Heart left ventricle (tissue), 16 donors: ENCODE measurements at regions of chr17 and their contacts with region 1.

Region 1: GRCh38 chr17:49707608-49708514 is at the start of gene SLC35B1:
- DNase-seq: peak; percentile 99 to 100 (median 99)
- ATAC-seq: peak; percentile 99 to 100 (median 100)
- H3K4me3 ChIP-seq: peak within 1 kb of the TSS; percentile 72 to 100 (median 90)
- H3K27ac ChIP-seq: peak within 1 kb of the TSS; percentile 88 to 99 (median 95)
- H3K4me1 ChIP-seq: peaks cover 0 to 30% (median 19%) of the 10 kb centered on the region in 12 donors
- H3K27me3 ChIP-seq: no peaks in the 10 kb centered on the region
- CTCF ChIP-seq: peak; percentile 50 to 91 (median 72)
- POLR2A ChIP-seq: peak in 1 of 2 donors; percentile 70
- total RNA-seq, gene SLC35B1: 61.0 to 93.4 (median 66.2) TPM

Region 2: GRCh38 chr17:49434821-49435670 is 272.8 kb before region 1 on chr17:
- intact Hi-C with region 1: loop called in 1 of 10 experiments (anchors 10 kb)
- DNase-seq: peak in 1 of 5 donors; percentile 19
- ATAC-seq: peak; percentile 53 to 76 (median 66)
- H3K4me3 ChIP-seq: no peak overlapping the region
- H3K27ac ChIP-seq: no peak overlapping the region
- H3K4me1 ChIP-seq: no peaks in the 10 kb centered on the region
- H3K27me3 ChIP-seq: peaks cover 2 to 30% (median 19%) of the 10 kb centered on the region in 9 donors
- CTCF ChIP-seq: peak; percentile 53 to 80 (median 73)
- POLR2A ChIP-seq: no peak

Region 3: DNA sequence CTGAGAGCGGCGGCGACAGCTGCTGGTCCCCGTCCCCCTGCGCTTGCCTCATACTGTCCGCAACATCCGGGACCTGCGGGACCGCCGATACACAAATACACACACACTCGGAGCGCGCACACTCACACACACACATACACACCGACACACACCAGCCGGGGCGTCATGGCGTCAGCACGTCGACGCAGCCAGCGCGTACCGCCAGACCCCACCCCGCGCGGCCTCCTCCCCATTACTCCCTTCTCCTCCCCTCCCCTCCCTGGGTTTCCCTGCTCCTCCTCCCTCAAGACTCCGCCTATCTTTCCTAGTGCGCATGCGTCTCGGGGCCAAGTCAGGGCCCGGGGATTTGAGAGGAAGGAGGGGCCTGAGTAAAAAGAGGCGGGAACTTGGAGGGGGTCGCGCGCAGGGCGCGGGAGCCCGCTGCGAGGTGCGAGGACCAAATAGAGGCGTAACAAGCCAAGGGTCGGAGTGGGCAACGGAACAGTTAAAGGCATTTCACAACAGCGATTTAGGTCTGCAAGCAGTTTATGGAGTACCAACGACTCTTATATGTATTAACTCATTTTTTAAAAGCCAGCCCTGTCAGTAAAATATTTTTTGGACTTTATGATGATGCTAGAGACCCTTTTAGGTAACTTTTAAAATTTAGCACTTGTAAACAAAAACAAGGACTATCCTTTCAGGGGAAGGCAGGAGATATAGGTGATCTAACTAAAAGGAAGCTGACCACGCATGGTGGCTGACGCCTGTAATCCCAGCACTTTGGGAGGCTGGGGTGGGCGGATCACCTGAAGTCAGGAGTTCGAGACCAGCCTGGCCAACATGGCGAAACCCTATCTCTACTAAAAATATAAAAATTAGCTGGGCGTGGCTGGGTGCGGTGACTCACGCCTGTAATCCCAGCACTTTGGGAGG is 29.7 kb before region 1 on chr17 and contains the start of gene SPOP:
- intact Hi-C with region 1: loop called in 1 of 10 experiments (anchors 2 kb)
- DNase-seq: peak; percentile 99 to 100 (median 100)
- ATAC-seq: peak; percentile 98 to 99 (median 99)
- H3K4me3 ChIP-seq: peak within 1 kb of the TSS; percentile 33 to 89 (median 76)
- H3K27ac ChIP-seq: peak within 1 kb of the TSS; percentile 90 to 99 (median 97)
- H3K4me1 ChIP-seq: peaks cover 0 to 59% (median 35%) of the 10 kb centered on the region in 12 donors
- H3K27me3 ChIP-seq: no peaks in the 10 kb centered on the region
- CTCF ChIP-seq: peak in 1 of 12 donors; percentile 11
- POLR2A ChIP-seq: peak in 1 of 2 donors; percentile 49
- total RNA-seq, gene SPOP: 46.7 to 96.1 (median 60.4) TPM

Region 4: DNA sequence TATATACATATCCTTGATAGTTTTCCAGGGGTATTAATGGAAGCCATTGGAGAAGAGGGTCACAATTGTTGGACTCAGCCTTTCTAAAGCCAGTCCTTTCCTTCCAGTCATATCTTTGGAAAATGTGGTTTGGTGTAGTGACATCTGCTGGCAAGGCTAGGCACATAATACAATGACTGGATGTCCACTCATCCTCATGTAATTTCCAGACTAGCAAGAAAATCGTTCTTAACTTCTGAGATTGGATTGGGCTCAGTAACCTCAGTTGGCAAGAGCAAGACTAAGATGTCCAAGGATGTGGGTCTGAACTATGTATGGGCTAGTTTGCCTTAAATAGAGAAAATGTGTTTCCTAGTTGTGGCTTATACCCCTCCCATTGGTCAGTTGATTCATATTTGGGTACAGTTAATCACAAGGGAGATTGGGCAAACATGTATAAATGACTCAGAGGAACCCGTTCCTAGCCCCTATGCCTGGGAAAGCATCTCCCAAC is 71.9 kb after region 1 on chr17:
- intact Hi-C with region 1: loop called in 8 of 10 experiments (anchors 1 to 5 kb)
- DNase-seq: peak in 1 of 5 donors; percentile 36
- ATAC-seq: peak; percentile 28 to 67 (median 56)
- H3K4me3 ChIP-seq: no peak overlapping the region
- H3K27ac ChIP-seq: peak overlapping the region in 4 of 12 donors; percentile 8 to 38 (median 32)
- H3K4me1 ChIP-seq: peaks cover 0 to 58% (median 31%) of the 10 kb centered on the region in 12 donors
- H3K27me3 ChIP-seq: no peaks in the 10 kb centered on the region
- CTCF ChIP-seq: peak; percentile 31 to 74 (median 62)
- POLR2A ChIP-seq: no peak

Region 5: DNA sequence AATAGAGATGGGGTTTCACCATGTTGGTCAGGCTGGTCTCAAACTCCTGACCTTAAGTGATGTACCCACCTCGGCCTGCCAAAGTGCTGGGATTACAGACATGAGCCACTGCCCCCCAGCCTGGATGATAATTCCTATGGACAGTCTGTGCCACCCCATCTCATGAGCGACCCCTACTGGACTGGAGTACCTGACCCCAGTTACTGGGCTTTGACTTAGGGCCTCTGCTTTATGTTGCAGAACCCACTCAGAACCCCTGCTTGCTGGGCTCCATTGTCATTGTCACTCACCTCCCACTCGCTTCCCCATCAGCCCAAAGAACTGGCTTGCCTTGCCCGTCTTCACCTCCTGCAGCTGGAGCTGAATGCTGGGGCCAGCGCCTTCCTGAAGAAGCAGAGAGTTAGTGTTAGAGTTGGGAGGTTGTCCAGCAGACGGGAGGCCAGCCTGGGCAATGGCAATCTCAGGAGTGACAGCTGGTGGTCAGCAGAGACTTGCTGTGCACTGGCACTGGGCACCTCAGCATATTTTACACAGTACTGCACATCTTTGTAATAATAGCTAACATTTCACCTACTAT is 136.0 kb after region 1 on chr17:
- intact Hi-C with region 1: loop called in 1 of 10 experiments (anchors 5 kb)
- DNase-seq: peak in 1 of 5 donors; percentile 24
- ATAC-seq: no peak
- H3K4me3 ChIP-seq: no peak overlapping the region
- H3K27ac ChIP-seq: peak overlapping the region in 2 of 12 donors; percentile 15 to 91
- H3K4me1 ChIP-seq: peaks cover 0 to 46% (median 25%) of the 10 kb centered on the region in 12 donors
- H3K27me3 ChIP-seq: no peaks in the 10 kb centered on the region
- CTCF ChIP-seq: peak in 4 of 12 donors; percentile 22 to 34 (median 24)
- POLR2A ChIP-seq: no peak

Region 6: GRCh38 chr17:49997791-49998703 is 290.2 kb after region 1 on chr17:
- intact Hi-C with region 1: loop called in 4 of 10 experiments (anchors 5 to 10 kb)
- DNase-seq: peak; percentile 73 to 80 (median 78)
- ATAC-seq: peak; percentile 77 to 82 (median 78)
- H3K4me3 ChIP-seq: no peak overlapping the region
- H3K27ac ChIP-seq: no peak overlapping the region
- H3K4me1 ChIP-seq: peaks cover 0 to 38% (median 23%) of the 10 kb centered on the region in 12 donors
- H3K27me3 ChIP-seq: peaks cover 33 to 96% (median 81%) of the 10 kb centered on the region in 9 donors
- CTCF ChIP-seq: peak; percentile 86 to 98 (median 95)
- POLR2A ChIP-seq: no peak